Activated CD4-positive, alpha-beta memory T cell treated with anti-CD3 and anti-CD28 coated beads, Interleukin-2, amount 10 ng/mL, durations not matched to agents 7 days and 5 days (primary cell): ENCODE measurements at regions of chr15 and their contacts with region 1.

Region 1: DNA sequence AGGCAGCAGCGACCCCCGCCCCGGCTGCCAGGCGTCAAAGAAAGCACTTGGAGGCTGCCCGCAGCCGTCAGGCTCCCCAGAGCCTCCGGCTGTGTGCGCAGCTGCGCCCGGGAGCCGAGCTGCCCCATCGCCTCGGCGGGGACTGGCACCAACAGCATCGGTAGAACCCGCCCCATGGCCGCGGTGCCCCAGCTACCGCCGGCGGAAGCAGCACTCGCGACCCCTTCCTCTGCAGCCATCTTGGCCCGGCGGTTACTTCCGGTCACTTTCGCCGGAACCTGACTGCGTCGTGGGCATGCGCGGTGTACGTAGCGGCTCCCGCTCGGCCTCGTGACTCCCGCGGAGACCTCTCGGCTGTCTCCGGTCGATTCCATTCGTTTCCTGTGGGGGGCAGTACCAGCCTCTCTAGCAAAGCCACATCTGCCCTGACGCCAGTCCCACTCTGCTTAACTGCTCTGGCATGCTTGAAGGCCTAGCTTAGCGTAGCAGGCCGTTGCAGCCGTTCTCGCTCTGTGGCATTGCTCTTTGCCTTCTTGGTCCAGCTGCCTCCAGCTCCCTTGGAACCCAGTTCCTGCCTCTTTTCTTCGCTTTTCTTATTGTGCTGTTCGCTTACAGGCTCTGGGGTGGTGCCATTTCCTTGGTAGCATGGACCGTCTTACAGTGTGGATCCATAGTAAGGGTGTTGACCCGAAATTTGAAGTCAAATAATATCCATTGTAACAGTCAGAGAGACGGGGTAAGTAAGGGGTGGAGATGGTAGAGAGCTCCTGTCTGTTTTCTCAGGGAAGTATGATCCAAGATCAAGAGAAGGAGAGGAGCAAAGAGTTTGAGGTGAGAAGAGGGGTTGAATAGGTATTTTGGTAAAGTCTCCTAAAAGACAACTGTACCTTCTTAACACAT is at the start of gene SPG11:
- DNase-seq: peak; percentile 98
- H3K4me3 Mint-ChIP-seq: peak within 1 kb of the TSS; percentile 97
- H3K27ac Mint-ChIP-seq: peak within 1 kb of the TSS; percentile 92
- H3K4me1 Mint-ChIP-seq: peaks cover 63% of the 10 kb centered on the region
- H3K27me3 Mint-ChIP-seq: no peaks in the 10 kb centered on the region
- total RNA-seq, gene SPG11: 76.9 to 84.4 TPM

Region 2: DNA sequence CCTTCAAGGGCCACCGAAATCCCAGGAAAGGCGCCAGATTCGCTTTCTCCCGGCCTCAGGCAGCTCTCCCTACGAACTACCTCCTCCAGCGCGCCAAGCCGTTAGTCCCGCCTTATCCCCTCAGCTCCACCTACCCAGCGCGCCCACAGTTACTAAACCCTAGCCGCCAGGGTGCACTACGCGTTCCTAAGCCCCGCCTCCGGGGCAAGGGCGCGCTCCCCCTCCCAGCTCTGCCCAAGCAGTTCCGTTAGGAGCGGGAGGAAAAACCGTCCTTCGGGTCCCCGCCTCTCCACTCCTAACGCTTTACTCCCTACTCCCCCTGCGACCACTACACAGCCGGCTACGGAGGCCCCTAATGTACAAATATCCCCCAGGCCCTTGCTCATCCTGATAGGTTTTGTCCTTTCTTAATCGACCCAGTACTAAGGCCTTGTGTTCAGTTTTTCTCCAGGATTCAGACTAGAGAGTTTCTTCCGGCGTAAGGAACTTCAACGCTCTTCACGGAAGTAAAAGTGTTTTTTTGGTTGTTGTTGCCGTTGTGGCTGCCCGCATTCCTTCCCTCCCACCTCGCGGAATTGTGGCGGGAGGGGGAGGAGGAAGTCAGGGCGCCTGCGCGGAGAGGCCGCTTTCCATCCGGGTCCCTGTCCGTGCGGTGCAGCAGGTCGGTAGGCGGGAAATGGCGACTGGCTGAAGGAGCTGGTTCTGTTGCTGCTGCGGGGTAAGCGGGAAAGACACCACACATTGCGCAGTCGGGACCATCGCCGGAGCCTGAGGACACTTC is 236.5 kb before region 1 on chr15 and contains the start of gene CTDSPL2:
- CTCF ChIA-PET with region 1: no interaction called
- POLR2A ChIA-PET with region 1: interaction called, 19 read pairs
- DNase-seq: peak; percentile 95
- H3K4me3 Mint-ChIP-seq: peak within 1 kb of the TSS; percentile 91
- H3K27ac Mint-ChIP-seq: peak within 1 kb of the TSS; percentile 94
- H3K4me1 Mint-ChIP-seq: peaks cover 44% of the 10 kb centered on the region
- H3K27me3 Mint-ChIP-seq: no peaks in the 10 kb centered on the region
- total RNA-seq, gene CTDSPL2: 64.9 to 66.7 TPM

Region 3: GRCh38 chr15:44573386-44573785 is 90.3 kb before region 1 on chr15:
- CTCF ChIA-PET with region 1: interaction called, 26 read pairs
- POLR2A ChIA-PET with region 1: interaction called, 21 read pairs
- DNase-seq: no peak
- H3K4me3 Mint-ChIP-seq: no peak overlapping the region
- H3K27ac Mint-ChIP-seq: no peak overlapping the region
- H3K4me1 Mint-ChIP-seq: peaks cover 15% of the 10 kb centered on the region
- H3K27me3 Mint-ChIP-seq: no peaks in the 10 kb centered on the region

Region 4: DNA sequence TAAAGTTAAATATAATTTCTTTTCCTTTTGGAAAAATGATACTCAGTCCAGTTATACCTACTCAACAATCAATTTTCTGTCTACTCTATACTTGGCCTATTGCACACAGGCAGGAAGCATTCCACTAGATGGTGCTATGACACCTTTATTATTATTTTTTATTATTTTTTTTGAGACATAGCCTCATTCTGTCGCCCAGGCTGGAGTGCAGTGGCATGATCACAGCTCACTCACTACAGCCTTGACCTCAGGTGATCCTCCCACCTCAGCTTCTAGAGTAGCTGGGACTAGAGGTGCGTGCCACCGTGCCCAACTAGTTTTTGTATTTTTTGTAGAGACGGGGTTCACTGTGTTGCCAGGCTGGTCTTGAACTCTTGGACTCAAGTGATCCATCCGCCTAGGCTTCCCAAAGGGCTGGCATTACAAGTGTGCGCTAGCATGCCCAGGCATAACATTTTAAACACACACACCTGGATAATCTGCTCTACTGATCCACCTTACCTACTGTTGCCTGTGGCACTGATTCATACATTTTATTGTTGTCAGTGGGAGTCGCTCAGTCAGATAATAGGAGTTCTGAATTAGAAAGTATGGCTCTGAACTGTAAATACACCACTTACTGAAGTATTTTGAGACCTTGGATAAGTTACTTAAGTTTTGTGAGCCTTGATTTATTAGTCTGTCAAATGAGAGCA is 70.5 kb before region 1 on chr15:
- CTCF ChIA-PET with region 1: interaction called, 20 read pairs
- POLR2A ChIA-PET with region 1: interaction called, 47 read pairs
- DNase-seq: peak; percentile 20
- H3K4me3 Mint-ChIP-seq: no peak overlapping the region
- H3K27ac Mint-ChIP-seq: peak overlapping the region; percentile 37
- H3K4me1 Mint-ChIP-seq: peaks cover 34% of the 10 kb centered on the region
- H3K27me3 Mint-ChIP-seq: no peaks in the 10 kb centered on the region

Region 5: DNA sequence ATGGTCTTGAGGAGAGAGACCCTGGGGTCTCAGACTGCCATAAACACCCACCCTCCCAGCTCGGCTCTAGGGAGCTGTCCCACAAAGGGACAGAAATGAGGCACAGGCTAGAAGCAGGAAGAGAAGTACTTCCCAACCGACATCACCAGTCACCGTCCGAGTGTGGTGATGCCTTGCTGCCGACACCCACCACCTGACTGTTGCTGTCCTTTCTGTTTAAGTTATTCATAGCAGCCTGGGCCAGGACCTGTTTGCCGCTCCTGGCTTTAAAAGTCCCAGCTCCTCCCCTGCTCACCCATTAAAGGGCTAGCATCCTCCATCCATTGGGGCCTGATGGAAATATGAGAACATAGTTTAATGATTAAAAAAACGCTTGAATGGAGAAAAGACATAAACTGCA is 13.0 kb after region 1 on chr15:
- CTCF ChIA-PET with region 1: interaction called, 85 read pairs
- POLR2A ChIA-PET with region 1: interaction called, 232 read pairs
- DNase-seq: peak; percentile 63
- H3K4me3 Mint-ChIP-seq: peak overlapping the region; percentile 65
- H3K27ac Mint-ChIP-seq: peak overlapping the region; percentile 94
- H3K4me1 Mint-ChIP-seq: peaks cover 76% of the 10 kb centered on the region
- H3K27me3 Mint-ChIP-seq: no peaks in the 10 kb centered on the region

Region 6: DNA sequence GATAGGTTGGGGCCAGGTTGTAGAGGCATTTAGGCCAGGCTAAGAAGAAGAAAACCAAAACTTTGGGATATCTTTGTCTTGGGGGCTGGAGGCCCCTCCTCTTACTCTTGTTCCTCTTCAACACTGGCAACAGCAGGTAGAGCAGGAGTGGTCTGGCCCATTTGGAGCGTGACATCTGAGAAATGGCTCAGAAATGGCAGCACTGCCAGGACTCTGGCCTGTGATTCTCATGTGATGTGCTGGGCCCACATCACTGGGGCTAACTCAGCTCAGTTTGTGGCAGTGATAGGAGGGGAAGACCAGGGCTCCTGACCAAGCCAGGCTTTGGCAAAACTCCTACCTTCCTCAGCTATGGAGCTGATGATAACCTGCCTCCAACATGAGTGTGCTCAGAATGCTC is 29.0 kb after region 1 on chr15:
- CTCF ChIA-PET with region 1: interaction called, 19 read pairs
- POLR2A ChIA-PET with region 1: interaction called, 91 read pairs
- DNase-seq: no peak
- H3K4me3 Mint-ChIP-seq: no peak overlapping the region
- H3K27ac Mint-ChIP-seq: no peak overlapping the region
- H3K4me1 Mint-ChIP-seq: peaks cover 36% of the 10 kb centered on the region
- H3K27me3 Mint-ChIP-seq: peaks cover 9% of the 10 kb centered on the region

Region 7: GRCh38 chr15:45802140-45802539 is 1138.5 kb after region 1 on chr15:
- CTCF ChIA-PET with region 1: no interaction called
- POLR2A ChIA-PET with region 1: no interaction called
- DNase-seq: no peak
- H3K4me3 Mint-ChIP-seq: no peak overlapping the region
- H3K27ac Mint-ChIP-seq: no peak overlapping the region
- H3K4me1 Mint-ChIP-seq: no peaks in the 10 kb centered on the region
- H3K27me3 Mint-ChIP-seq: peaks cover 7% of the 10 kb centered on the region